ENCODE measurements at regions of chr7 and their contacts with region 1.

Region 1: DNA sequence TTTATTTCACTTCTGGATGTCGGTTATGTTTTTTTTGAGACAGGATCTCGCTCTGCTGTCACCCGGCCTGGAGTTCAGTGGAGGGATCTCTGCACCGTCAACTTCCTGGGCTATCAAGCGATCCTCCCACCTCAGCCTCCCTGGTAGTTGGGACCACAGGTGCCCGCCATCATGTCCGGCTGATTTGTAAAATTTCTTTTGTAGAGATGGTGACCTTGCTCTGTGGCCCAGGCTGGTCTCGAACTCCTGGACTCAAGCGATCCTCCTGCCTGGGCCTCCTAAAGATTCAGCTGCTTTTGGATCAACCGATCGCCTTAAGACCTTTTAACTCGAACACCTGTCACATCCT is 606 bp upstream of the RABGEF1 start:
- DNase-seq: no peak
- H3K4me3 ChIP-seq: peak overlapping the region; percentile 94
- H3K27ac ChIP-seq: peak overlapping the region; percentile 98
- H3K4me1 ChIP-seq: no peaks in the 10 kb centered on the region
- H3K27me3 ChIP-seq: no peaks in the 10 kb centered on the region
- CTCF ChIP-seq: no peak

Region 2: DNA sequence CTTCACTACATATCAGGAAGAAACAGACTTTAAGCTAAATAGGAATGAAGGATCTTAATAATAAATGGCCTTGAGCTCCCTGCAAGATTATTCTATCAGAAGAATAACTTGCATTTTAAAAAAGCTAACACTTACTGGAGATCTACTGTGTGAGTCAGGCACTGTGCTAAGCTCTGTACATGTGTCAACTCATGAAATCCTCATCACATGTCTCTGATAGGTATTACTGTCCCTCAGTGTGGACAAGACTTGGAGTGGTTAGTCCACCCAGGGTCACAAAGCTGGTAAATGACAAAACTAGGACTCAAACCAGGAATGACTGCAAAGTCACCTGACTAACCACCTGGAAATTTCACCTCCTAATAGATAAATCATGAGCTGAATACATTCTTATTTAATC is 168.4 kb before region 1 on chr7:
- intact Hi-C with region 1: no loop called
- DNase-seq: no peak
- H3K4me3 ChIP-seq: no peak overlapping the region
- H3K27ac ChIP-seq: no peak overlapping the region
- H3K4me1 ChIP-seq: no peaks in the 10 kb centered on the region
- H3K27me3 ChIP-seq: no peaks in the 10 kb centered on the region
- CTCF ChIP-seq: no peak

Region 3: DNA sequence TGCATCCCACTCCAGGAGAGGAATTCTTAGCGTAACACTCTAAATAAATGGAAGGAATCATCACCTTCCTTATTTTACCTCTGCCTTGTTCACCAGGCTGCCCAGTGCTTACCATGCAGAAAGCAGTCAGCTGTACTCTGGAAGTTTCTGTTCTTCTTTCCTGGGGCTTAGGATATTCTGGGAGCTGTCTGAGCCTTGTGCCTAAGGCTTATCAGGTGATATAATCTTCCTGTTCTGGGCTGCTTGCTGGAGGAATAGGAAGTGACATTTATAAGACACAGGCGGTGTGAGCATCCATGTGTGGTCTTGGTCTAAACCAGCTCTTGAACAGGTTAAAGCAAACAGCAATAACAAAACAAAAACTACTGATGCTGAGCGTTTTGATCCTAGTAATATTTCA is 97.7 kb before region 1 on chr7:
- intact Hi-C with region 1: loop called (anchors 10 kb)
- DNase-seq: no peak
- H3K4me3 ChIP-seq: no peak overlapping the region
- H3K27ac ChIP-seq: no peak overlapping the region
- H3K4me1 ChIP-seq: peaks cover 7% of the 10 kb centered on the region
- H3K27me3 ChIP-seq: no peaks in the 10 kb centered on the region
- CTCF ChIP-seq: no peak